ENCODE measurements at regions of chr12 and their contacts with region 1.

Region 1: GRCh38 chr12:56266693-56267442 is at the start of gene COQ10A:
- DNase-seq: peak; percentile 48
- ATAC-seq: peak; percentile 97
- H3K4me3 ChIP-seq: peak within 1 kb of the TSS; percentile 68
- H3K27ac ChIP-seq: peak within 1 kb of the TSS; percentile 41
- H3K4me1 ChIP-seq: peaks cover 4% of the 10 kb centered on the region
- H3K27me3 ChIP-seq: no peaks in the 10 kb centered on the region
- CTCF ChIP-seq: peak; percentile 53 to 62 (median 62)
- EP300 ChIP-seq: no peak
- POLR2A ChIP-seq: peak; percentile 97
- RAD21 ChIP-seq: peak; percentile 24; the same call in 1 of the 2 replicates
- polyA plus RNA-seq, gene COQ10A: 3.3 to 4.5 TPM

Region 2: GRCh38 chr12:56299853-56300643 is 33.2 kb after region 1 on chr12 and contains the start of gene CS:
- CTCF ChIA-PET with region 1: interaction called, 7 read pairs
- POLR2A ChIA-PET with region 1: interaction called, 4 read pairs
- RAD21 ChIA-PET with region 1: interaction called, 5 read pairs
- SMC1A ChIA-PET with region 1: no interaction called
- in situ Hi-C with region 1: no loop called
- intact Hi-C with region 1: loop called (anchors 2 kb)
- DNase-seq: peak; percentile 71
- ATAC-seq: peak; percentile 95
- H3K4me3 ChIP-seq: peak within 1 kb of the TSS; percentile 93
- H3K27ac ChIP-seq: peak within 1 kb of the TSS; percentile 85
- H3K4me1 ChIP-seq: peaks cover 32% of the 10 kb centered on the region
- H3K27me3 ChIP-seq: no peaks in the 10 kb centered on the region
- CTCF ChIP-seq: no peak
- EP300 ChIP-seq: no peak
- POLR2A ChIP-seq: peak; percentile 84
- RAD21 ChIP-seq: no peak
- polyA plus RNA-seq, gene CS: 64.9 to 104 TPM

Measured in GM12878 (cell line).